ENCODE measurements at regions of chr17 and their contacts with region 1.

Region 1: GRCh38 chr17:60435244-60436167 is 13.2 kb downstream of the CHCT1 start:
- DNase-seq: peak; percentile 62
- H3K4me3 Mint-ChIP-seq: no peak overlapping the region
- H3K27ac Mint-ChIP-seq: no peak overlapping the region
- H3K4me1 Mint-ChIP-seq: peaks cover 3% of the 10 kb centered on the region
- H3K27me3 Mint-ChIP-seq: peaks cover 2% of the 10 kb centered on the region

Region 2: GRCh38 chr17:60142872-60143499 is 292.5 kb before region 1 on chr17:
- CTCF ChIA-PET with region 1: interaction called, 4 read pairs
- POLR2A ChIA-PET with region 1: no interaction called
- intact Hi-C with region 1: loop called (anchors 1 kb)
- DNase-seq: peak; percentile 87
- H3K4me3 Mint-ChIP-seq: peak overlapping the region; percentile 8
- H3K27ac Mint-ChIP-seq: no peak overlapping the region
- H3K4me1 Mint-ChIP-seq: peaks cover 23% of the 10 kb centered on the region
- H3K27me3 Mint-ChIP-seq: peaks cover 85% of the 10 kb centered on the region

Region 3: GRCh38 chr17:60231234-60231633 is 204.3 kb before region 1 on chr17:
- CTCF ChIA-PET with region 1: interaction called, 4 read pairs
- POLR2A ChIA-PET with region 1: no interaction called
- intact Hi-C with region 1: loop called (anchors 5 kb)
- DNase-seq: no peak
- H3K4me3 Mint-ChIP-seq: no peak overlapping the region
- H3K27ac Mint-ChIP-seq: no peak overlapping the region
- H3K4me1 Mint-ChIP-seq: peaks cover 7% of the 10 kb centered on the region
- H3K27me3 Mint-ChIP-seq: no peaks in the 10 kb centered on the region

Measured in activated CD4-positive, alpha-beta memory T cell treated with anti-CD3 and anti-CD28 coated beads for 36 hours (primary cell).